CD4-positive, alpha-beta memory T cell (primary cell): ENCODE measurements at regions of chr9 and their contacts with region 1.

Region 1: DNA sequence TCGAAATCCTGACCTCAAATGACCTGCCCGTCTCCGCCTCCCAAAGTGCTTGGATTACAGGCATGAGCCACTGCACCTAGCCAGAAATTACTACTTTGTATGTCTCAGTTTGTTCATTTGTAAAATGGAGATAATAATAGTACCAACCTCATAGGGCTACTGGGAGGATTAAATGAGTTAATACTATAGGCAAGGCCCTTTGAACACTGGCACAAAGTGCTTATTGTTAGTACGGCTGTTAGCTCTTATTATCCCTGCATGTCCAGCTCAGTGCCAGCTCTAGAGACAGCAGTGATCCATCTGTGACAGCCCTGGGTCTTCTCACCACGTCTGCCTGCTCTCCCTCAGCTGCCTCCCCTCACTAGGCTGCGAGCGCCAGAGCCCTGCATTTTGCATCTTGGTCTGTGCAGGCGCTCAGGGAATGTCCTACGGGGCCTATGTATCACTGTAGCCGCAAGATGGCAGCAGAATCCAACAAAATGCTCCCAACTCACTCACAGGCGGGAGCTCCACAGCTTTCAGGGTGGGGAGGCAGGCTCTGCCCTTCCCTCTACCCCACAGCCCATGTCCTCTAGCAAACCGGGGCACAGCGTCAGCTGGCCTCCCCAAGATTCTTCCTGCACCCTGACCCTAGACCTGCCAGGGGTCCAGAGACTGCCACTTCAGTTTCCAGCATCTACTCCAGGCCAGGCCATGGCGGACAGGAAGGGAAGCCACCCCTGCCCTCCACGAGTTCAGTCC is 17.7 kb upstream of the AKNA start:
- DNase-seq: peak; percentile 76 to 82 (median 80)
- H3K4me3 ChIP-seq: no peak overlapping the region
- H3K4me3 Mint-ChIP-seq: peak overlapping the region in 2 of 8 donors; percentile 17 to 65
- H3K27ac ChIP-seq: no peak overlapping the region
- H3K27ac Mint-ChIP-seq: peak overlapping the region in 4 of 7 donors; percentile 29 to 79 (median 54)
- H3K4me1 ChIP-seq: peaks cover 9% of the 10 kb centered on the region
- H3K4me1 Mint-ChIP-seq: peaks cover 4 to 6% (median 5%) of the 10 kb centered on the region in 4 donors
- H3K27me3 ChIP-seq: no peaks in the 10 kb centered on the region
- H3K27me3 Mint-ChIP-seq: no peaks in the 10 kb centered on the region

Region 2: DNA sequence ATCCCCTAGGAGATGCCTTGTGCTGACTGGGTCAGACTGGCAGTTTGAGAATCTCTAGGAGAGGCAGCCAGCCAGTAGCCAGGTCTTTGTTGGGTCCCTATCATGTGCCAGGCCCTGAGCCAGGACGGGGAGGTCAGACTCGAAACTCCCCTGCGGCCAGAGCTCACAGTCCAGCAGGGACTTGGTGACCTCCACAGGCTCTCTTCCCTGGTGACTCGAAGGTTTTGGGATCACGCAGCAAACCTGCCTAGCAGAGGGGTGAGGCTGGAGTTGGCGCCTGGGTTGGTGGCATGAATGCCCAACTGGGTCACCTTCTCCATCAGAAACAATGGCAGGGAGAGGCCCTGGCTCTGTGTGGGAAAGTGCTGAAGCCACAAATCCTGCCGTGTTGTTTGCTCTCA is 97.1 kb before region 1 on chr9:
- CTCF ChIA-PET with region 1: no interaction called
- POLR2A ChIA-PET with region 1: no interaction called
- intact Hi-C with region 1: no loop called
- DNase-seq: no peak
- H3K4me3 ChIP-seq: no peak overlapping the region
- H3K4me3 Mint-ChIP-seq: no peak overlapping the region
- H3K27ac ChIP-seq: no peak overlapping the region
- H3K27ac Mint-ChIP-seq: no peak overlapping the region
- H3K4me1 ChIP-seq: peaks cover 3% of the 10 kb centered on the region
- H3K4me1 Mint-ChIP-seq: peaks cover 0 to 14% (median 5%) of the 10 kb centered on the region in 4 donors
- H3K27me3 ChIP-seq: no peaks in the 10 kb centered on the region
- H3K27me3 Mint-ChIP-seq: no peaks in the 10 kb centered on the region

Region 3: GRCh38 chr9:114366334-114367128 is 38.9 kb before region 1 on chr9:
- CTCF ChIA-PET with region 1: interaction called, 18 read pairs
- POLR2A ChIA-PET with region 1: interaction called, 1,614 read pairs
- intact Hi-C with region 1: no loop called
- DNase-seq: peak; percentile 52 to 78 (median 61)
- H3K4me3 ChIP-seq: no peak overlapping the region
- H3K4me3 Mint-ChIP-seq: peak overlapping the region; percentile 57 to 80 (median 66)
- H3K27ac ChIP-seq: peak overlapping the region; percentile 62
- H3K27ac Mint-ChIP-seq: peak overlapping the region; percentile 78 to 97 (median 96)
- H3K4me1 ChIP-seq: peaks cover 99% of the 10 kb centered on the region
- H3K4me1 Mint-ChIP-seq: peaks cover 57 to 94% (median 80%) of the 10 kb centered on the region in 4 donors
- H3K27me3 ChIP-seq: no peaks in the 10 kb centered on the region
- H3K27me3 Mint-ChIP-seq: no peaks in the 10 kb centered on the region

Region 4: GRCh38 chr9:114434878-114435311 is 29.4 kb after region 1 on chr9:
- CTCF ChIA-PET with region 1: interaction called, 17 read pairs
- POLR2A ChIA-PET with region 1: interaction called, 3 read pairs
- intact Hi-C with region 1: no loop called
- DNase-seq: peak in 3 of 5 donors; percentile 7 to 16 (median 15)
- H3K4me3 ChIP-seq: no peak overlapping the region
- H3K4me3 Mint-ChIP-seq: no peak overlapping the region
- H3K27ac ChIP-seq: no peak overlapping the region
- H3K27ac Mint-ChIP-seq: no peak overlapping the region
- H3K4me1 ChIP-seq: peaks cover 6% of the 10 kb centered on the region
- H3K4me1 Mint-ChIP-seq: peaks cover 0 to 4% (median 2%) of the 10 kb centered on the region in 4 donors
- H3K27me3 ChIP-seq: no peaks in the 10 kb centered on the region
- H3K27me3 Mint-ChIP-seq: no peaks in the 10 kb centered on the region

Region 5: GRCh38 chr9:114587385-114588202 is 182.1 kb after region 1 on chr9 and contains the start of gene ATP6V1G1:
- CTCF ChIA-PET with region 1: interaction called, 53 read pairs
- POLR2A ChIA-PET with region 1: interaction called, 18 read pairs
- intact Hi-C with region 1: loop called (anchors 1 kb)
- DNase-seq: peak; percentile 95 to 99 (median 97)
- H3K4me3 ChIP-seq: peak within 1 kb of the TSS; percentile 47 to 82
- H3K4me3 Mint-ChIP-seq: peak within 1 kb of the TSS; percentile 96 to 99 (median 99)
- H3K27ac ChIP-seq: peak within 1 kb of the TSS; percentile 93
- H3K27ac Mint-ChIP-seq: peak within 1 kb of the TSS; percentile 98 to 100 (median 99)
- H3K4me1 ChIP-seq: peaks cover 47% of the 10 kb centered on the region
- H3K4me1 Mint-ChIP-seq: peaks cover 35 to 56% (median 45%) of the 10 kb centered on the region in 4 donors
- H3K27me3 ChIP-seq: no peaks in the 10 kb centered on the region
- H3K27me3 Mint-ChIP-seq: no peaks in the 10 kb centered on the region
- total RNA-seq, gene ATP6V1G1: 121 TPM

Region 6: DNA sequence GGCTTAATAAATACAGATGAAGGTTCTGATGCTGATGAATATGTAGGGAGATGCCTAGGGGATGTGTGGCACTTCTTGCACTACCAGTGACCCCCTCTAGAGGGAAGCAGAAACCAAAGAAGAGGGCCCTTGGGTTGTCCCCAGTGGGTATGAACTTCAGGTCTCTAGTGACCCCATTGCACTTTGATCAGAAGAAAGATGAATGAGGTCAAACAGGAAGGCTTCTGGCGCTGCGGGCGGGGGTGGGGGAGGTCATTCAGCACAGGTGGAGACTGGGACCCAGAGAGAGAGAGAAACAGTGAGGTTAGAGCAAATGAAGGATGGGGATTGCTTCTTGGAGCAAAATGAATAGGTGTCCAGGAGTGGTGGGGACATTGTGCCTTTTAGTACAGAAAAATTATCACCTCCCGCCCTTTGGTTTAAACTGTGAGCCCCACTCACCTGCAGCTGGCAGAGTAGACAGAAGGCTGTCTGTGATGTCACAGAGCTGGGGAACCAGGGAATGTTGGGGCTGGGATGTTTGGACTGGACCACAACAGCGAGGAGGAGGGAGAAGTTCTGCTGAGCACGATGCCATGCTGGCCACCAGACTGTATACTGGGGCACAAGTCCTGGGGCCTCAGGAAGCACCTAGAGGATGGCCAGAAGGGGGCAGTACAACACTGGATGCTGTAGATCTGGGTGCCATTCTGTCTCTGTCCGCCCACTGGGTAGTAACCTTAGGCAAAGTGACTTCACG is 276.3 kb after region 1 on chr9 and contains the start of gene TEX48:
- CTCF ChIA-PET with region 1: interaction called, 16 read pairs
- POLR2A ChIA-PET with region 1: interaction called, 4 read pairs
- intact Hi-C with region 1: loop called (anchors 1 kb)
- DNase-seq: peak; percentile 79 to 84 (median 81)
- H3K4me3 ChIP-seq: peak within 1 kb of the TSS in 1 of 2 donors; percentile 11
- H3K4me3 Mint-ChIP-seq: peak within 1 kb of the TSS; percentile 1 to 80 (median 62)
- H3K27ac ChIP-seq: peak within 1 kb of the TSS; percentile 23
- H3K27ac Mint-ChIP-seq: peak within 1 kb of the TSS; percentile 75 to 96 (median 92)
- H3K4me1 ChIP-seq: peaks cover 22% of the 10 kb centered on the region
- H3K4me1 Mint-ChIP-seq: peaks cover 15 to 18% (median 17%) of the 10 kb centered on the region in 4 donors
- H3K27me3 ChIP-seq: no peaks in the 10 kb centered on the region
- H3K27me3 Mint-ChIP-seq: peaks cover 2 to 3% of the 10 kb centered on the region in 2 donors
- total RNA-seq, gene TEX48: not detected